Astrocyte of the cerebellum (primary cell): ENCODE measurements at regions of chr3 and their contacts with region 1.

Region 1: DNA sequence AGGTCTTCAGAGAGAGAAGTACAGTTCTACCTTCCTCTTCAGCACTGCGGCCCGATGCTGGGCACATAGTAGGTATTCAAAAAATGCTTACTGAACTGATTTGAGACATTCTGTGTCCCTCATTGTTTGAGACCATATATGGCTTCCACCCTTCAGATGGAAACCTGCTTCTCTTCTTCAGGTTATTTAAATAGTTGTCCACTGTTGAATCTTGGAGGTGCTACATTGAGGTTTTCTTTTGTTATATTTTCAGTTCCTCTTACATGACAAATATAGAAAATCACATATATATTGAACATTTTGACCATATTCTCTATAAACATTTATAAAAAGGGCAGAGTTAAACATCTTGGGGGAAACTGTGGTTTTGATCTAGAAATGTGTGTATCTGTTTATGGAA is 200.2 kb upstream of the LRRC3B start:
- DNase-seq: no peak
- H3K4me3 ChIP-seq: no peak overlapping the region
- CTCF ChIP-seq: no peak

Region 2: GRCh38 chr3:26369119-26369518 is 53.3 kb before region 1 on chr3:
- in situ Hi-C with region 1: loop called (anchors 10 kb)
- DNase-seq: no peak
- H3K4me3 ChIP-seq: no peak overlapping the region
- CTCF ChIP-seq: no peak

Region 3: GRCh38 chr3:26460985-26461384 is 38.6 kb after region 1 on chr3:
- in situ Hi-C with region 1: no loop called
- DNase-seq: no peak
- H3K4me3 ChIP-seq: no peak overlapping the region
- CTCF ChIP-seq: no peak